PC-9 (cell line): ENCODE measurements at regions of chr9 and their contacts with region 1.

Region 1: DNA sequence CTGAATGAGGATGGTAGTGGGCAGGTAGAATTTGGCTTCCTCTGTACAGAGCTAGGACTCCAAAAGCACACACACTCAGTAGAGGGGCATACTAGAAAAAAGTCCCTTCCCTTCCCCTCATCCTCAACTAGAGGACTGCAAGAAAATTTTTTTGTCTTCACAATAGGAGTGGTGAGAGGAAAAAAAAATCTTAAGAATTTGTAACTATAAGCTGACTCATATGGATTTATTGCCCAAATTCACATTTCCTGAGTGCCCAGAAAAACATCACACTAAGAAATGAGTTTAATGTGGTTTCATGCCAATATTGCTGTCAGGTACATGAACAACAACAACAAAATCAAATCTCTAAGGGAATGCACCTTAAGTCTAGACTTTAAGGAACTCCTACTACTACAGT is 43.7 kb downstream of the RANBP6 start:
- DNase-seq: no peak
- H3K4me3 ChIP-seq: no peak overlapping the region
- H3K27ac ChIP-seq: 0 out of 2 replicates have a peak overlapping the region, but pooled peaks have one; percentile 16
- H3K4me1 ChIP-seq: no peaks in the 10 kb centered on the region
- H3K27me3 ChIP-seq: no peaks in the 10 kb centered on the region
- CTCF ChIP-seq: no peak

Region 2: GRCh38 chr9:5994493-5994892 is 22.8 kb after region 1 on chr9:
- CTCF ChIA-PET with region 1: no interaction called
- POLR2A ChIA-PET with region 1: interaction called, 13 read pairs
- intact Hi-C with region 1: no loop called
- DNase-seq: no peak
- H3K4me3 ChIP-seq: no peak overlapping the region
- H3K27ac ChIP-seq: no peak overlapping the region
- H3K4me1 ChIP-seq: no peaks in the 10 kb centered on the region
- H3K27me3 ChIP-seq: no peaks in the 10 kb centered on the region
- CTCF ChIP-seq: no peak

Region 3: GRCh38 chr9:6055213-6055612 is 83.5 kb after region 1 on chr9:
- CTCF ChIA-PET with region 1: no interaction called
- POLR2A ChIA-PET with region 1: no interaction called
- intact Hi-C with region 1: no loop called
- DNase-seq: peak; percentile 44 to 81
- H3K4me3 ChIP-seq: no peak overlapping the region
- H3K27ac ChIP-seq: no peak overlapping the region
- H3K4me1 ChIP-seq: peaks cover 9% of the 10 kb centered on the region; the same call in 1 of the 2 replicates
- H3K27me3 ChIP-seq: no peaks in the 10 kb centered on the region
- CTCF ChIP-seq: peak; percentile 77